Endothelial cell of umbilical vein (primary cell): ENCODE measurements at regions of chrX and their contacts with region 1.

Region 1: DNA sequence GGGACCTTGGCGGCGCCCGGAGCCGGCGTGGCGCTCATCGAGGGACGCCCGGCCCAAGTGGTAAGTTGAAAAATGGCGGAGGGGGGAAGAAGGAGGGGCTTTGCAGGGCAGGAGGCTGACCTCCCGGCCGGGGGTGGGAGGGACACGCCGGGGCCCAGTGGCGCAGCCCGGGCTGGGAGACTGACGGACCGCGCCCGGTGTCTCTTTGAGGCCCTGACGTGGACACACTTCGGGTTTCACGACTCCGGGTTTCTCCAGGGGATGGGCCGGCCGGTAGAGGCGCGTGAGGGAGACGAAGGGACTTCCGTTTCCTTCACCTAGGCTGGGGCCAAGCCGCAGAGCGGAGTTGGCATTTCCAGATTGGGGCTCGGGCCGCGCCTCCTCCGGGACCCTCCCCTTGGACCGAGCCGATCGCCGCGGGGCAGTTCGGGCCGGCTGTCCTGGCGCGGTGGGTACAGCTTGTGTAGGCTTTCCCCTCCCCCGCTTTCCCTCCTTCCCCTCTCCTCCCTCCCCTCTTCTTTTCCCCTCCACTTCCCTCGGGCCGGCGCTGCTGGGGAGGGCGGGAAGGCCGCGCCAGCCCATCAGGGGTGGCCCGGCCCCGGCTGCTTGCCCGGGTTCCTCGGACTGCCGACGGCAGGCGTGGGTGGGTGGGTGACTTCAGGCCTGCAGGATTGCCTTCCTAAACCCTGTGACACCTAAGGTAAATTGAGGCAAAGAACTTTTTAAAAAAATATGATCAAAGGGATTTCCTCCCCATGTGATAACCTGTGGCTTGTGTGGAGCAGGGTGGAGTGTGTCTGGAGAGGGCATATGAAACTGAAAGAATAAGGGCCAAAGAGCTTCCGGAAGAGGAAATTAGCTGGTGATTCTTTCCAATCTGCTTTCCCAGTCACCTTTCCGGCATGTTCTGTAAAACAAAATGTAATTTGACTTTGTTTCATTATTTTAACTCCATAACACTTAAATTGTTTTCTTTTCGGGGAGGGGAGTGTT is at the start of gene XIAP:
- DNase-seq: peak; percentile 85
- H3K4me3 ChIP-seq: peak within 1 kb of the TSS; percentile 71 to 98 (median 87)
- H3K27ac ChIP-seq: peak within 1 kb of the TSS; percentile 100
- H3K4me1 ChIP-seq: peaks cover 4% of the 10 kb centered on the region
- H3K27me3 ChIP-seq: no peaks in the 10 kb centered on the region
- CTCF ChIP-seq: no peak
- POLR2A ChIP-seq: no peak
- total RNA-seq, gene XIAP: 34.5 and 38.3 TPM in 2 replicates

Region 2: DNA sequence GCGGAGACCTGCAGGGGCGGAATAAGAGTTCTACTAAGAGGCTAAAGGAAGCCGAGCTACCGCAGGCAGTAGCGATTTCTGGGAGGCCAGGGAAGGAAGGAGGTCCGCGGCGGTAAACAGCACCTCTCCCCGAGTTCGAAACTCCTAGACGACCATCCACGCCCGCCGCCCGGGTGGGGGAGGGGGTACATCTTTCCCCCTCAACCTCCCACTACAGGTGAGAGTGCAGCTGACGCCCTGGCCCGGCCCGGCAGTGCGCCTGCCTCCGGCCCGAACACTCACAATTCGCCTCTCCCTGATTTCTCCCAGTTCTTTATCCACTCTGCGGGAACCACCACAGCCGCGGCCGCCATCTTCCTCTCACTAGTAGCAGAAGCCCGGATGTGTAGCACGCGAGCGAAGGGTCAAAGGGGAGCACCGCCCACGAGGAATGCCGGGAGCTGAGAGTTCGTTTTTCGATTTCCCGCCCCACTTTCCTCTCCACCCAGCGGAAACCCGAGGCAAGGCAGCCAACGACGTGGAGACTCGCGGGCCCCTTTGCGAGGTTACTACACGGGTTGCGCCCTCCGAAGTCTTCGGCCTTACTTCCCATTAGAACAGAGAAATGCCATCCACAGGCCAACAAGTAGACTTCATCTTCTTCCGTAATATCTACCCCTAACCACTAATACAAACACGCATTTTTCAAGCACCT is 127.3 kb before region 1 on chrX and contains the start of gene THOC2:
- CTCF ChIA-PET with region 1: no interaction called
- POLR2A ChIA-PET with region 1: no interaction called
- dilution Hi-C with region 1: no loop called
- intact Hi-C with region 1: loop called (anchors 2 kb)
- DNase-seq: peak; percentile 85
- H3K4me3 ChIP-seq: peak within 1 kb of the TSS; percentile 74 to 96 (median 95)
- H3K27ac ChIP-seq: peak within 1 kb of the TSS; percentile 87
- H3K4me1 ChIP-seq: peaks cover 24% of the 10 kb centered on the region
- H3K27me3 ChIP-seq: no peaks in the 10 kb centered on the region
- CTCF ChIP-seq: peak in 1 of 2 donors; percentile 33
- POLR2A ChIP-seq: peak; percentile 76
- total RNA-seq, gene THOC2: 67.8 and 72.9 TPM in 2 replicates

Region 3: DNA sequence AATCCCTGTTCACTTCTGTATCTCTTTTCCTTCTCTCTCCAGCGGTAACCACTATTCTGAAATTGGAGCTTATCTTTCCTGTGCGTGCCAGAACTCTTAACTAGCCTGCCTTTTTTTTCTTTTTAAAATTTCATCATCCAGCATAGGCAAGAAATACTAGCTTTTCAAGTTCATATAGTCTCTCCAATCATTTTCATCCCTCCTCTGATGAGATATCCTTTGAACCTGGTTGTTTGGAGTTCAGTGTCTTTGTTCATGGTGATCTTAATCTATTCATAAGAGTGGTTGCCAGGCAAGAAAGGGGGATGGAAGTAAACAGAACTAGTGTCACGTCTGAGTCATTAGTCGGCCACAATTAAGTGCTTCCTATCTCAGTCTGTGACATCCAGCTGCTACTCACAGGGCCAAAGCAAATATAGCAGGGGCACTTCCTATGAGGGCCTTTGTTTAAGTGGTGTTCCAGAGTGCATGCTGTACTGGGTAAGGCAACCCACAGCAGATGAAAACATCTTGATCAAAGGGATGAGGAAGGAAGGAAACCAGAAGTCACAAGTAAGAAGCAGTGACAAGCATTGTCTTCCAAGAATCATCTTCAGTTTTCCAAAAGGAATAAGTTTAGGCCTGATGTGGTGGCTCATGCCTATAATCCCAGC is 56.7 kb before region 1 on chrX:
- CTCF ChIA-PET with region 1: no interaction called
- POLR2A ChIA-PET with region 1: no interaction called
- dilution Hi-C with region 1: no loop called
- intact Hi-C with region 1: loop called (anchors 1 kb)
- DNase-seq: peak; percentile 91
- H3K4me3 ChIP-seq: no peak overlapping the region
- H3K27ac ChIP-seq: peak overlapping the region; percentile 69
- H3K4me1 ChIP-seq: peaks cover 6% of the 10 kb centered on the region
- H3K27me3 ChIP-seq: no peaks in the 10 kb centered on the region
- CTCF ChIP-seq: no peak
- POLR2A ChIP-seq: no peak